ENCODE measurements at regions of chr19 and their contacts with region 1.

Region 1: DNA sequence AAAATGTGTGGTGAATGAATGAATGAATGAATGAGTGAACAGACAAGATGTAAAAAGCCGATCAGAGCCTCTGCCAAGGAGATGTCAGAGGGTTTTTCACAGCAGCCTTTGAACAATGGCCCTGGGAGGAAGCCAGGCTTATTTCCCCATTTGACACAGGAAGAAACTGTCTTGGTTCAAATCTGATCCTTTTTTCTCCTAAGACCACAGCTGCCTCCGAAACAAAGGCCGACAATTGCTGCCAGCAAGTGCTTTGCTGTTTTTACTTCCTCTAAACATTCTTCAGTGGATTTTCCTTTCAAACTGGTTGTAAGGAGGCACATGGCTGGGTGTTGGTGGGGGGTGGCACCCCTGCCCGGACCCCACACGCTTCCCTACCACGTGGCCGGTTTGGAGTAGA is 44.2 kb upstream of the HOMER3 start:
- DNase-seq: no peak
- H3K4me3 ChIP-seq: no peak overlapping the region
- CTCF ChIP-seq: no peak

Region 2: DNA sequence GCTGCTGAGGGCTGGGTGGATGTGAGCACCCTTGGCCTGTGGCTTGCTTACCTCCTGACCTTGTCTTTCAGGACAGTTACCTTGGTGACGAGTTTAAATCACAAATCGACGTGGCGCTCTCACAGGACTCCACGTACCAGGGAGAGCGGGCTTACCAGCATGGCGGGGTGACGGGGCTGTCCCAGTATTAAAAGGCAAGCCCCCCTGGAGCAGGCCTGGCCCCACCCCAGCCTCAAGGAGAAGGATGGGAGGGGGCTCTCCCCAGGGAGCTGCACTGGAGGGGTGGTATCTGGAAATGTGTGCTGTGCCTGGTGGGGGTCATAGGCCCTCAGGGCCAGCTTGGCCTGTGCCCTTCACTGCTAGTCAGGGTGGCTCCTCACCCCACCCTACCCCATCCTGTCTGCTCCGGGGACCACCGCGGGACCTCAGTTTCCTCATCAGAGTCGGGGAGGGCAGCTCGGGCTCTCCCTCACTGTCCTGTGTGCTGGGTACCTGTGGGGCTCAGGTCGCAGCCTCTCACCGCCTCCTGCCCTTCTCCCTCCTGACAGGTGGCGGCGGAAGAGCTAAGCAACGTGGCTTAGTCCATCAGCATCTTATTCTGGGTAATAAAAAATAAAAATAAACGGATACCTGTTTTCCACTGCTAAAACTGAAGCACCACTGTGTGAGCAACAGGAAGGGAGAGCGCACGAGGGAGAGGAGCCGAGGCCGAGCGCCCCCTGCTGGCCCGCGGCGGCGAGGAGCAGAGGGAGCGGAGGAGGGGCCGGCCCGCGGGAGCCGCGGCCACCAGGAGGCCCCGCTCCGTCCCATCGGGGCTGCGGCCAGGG is 119.1 kb before region 1 on chr19:
- CTCF ChIA-PET with region 1: interaction called, 17 read pairs
- POLR2A ChIA-PET with region 1: no interaction called
- DNase-seq: no peak
- H3K4me3 ChIP-seq: no peak overlapping the region
- CTCF ChIP-seq: peak; percentile 94

Region 3: GRCh38 chr19:18895038-18895823 is 90.0 kb before region 1 on chr19:
- CTCF ChIA-PET with region 1: interaction called, 16 read pairs
- POLR2A ChIA-PET with region 1: no interaction called
- DNase-seq: no peak
- H3K4me3 ChIP-seq: peak overlapping the region; percentile 49
- CTCF ChIP-seq: peak; percentile 29

Region 4: DNA sequence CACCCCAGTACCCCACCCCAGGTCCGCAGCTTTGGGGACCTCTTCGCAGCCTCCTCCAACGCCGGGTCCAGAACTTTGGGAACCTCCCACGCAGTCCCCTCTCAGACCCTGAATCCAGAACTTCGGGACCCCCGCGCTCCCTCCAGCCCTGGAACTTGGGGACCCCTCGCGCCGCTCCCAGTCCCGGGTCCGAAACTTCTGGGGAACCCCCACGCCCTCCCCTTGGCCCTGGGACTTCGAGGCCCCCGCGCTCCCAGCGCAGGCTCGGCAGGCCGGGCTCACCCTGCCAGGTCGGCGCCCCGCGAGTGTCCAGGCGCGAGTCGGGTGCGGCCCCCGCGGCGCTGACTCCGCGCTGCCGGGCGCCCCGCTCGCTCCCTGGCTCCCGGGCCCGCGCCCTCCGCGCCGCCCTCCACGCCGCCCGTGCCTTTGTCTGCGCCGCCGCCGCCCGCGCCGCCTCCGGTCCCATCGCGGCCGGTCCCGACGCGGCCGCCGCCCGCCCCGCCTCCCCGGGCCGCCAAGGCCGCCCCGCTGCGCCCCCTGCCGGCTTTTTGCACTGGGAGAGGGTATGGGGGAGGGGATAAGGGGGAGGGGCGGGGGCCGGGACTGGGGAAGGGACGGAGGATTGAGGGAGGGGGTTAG is 44.4 kb before region 1 on chr19 and contains the start of gene HOMER3:
- CTCF ChIA-PET with region 1: interaction called, 27 read pairs
- POLR2A ChIA-PET with region 1: no interaction called
- DNase-seq: no peak
- H3K4me3 ChIP-seq: peak within 1 kb of the TSS; percentile 83
- CTCF ChIP-seq: peak; percentile 60

Region 5: DNA sequence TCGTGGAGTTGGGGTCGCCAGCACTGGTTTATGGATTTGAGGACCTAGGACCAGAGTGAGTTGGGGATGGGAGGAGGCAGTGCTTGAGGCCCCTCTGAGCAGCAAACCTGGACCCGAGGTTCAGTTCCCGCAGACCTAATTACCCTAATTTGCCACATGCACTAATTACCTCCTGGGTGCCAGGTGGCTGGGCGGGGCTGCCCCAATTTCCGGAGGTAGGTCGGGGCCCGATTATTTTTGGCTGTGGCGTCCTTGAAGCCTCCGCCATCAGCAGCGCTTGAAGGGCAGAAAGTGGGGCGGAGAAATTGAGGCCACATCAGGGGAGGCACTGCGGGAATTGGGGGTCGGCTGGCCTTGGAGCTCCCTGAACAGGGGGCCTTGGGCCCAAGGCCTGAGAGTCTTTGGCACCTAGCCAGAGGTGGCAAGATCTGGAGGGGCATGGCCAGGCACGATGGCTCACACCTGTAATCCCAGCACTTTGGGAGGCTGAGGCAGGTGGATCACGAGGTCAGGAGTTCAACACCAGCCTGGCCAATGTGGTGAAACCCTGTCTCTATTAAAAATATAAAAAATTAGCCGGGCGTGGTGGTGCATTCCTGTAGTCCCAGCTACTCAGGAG is 38.2 kb before region 1 on chr19:
- CTCF ChIA-PET with region 1: interaction called, 15 read pairs
- POLR2A ChIA-PET with region 1: no interaction called
- DNase-seq: no peak
- H3K4me3 ChIP-seq: no peak overlapping the region
- CTCF ChIP-seq: no peak

Region 6: GRCh38 chr19:18972301-18972811 is 12.9 kb before region 1 on chr19:
- CTCF ChIA-PET with region 1: interaction called, 11 read pairs
- POLR2A ChIA-PET with region 1: interaction called, 6 read pairs
- DNase-seq: no peak
- H3K4me3 ChIP-seq: no peak overlapping the region
- CTCF ChIP-seq: no peak

Region 7: DNA sequence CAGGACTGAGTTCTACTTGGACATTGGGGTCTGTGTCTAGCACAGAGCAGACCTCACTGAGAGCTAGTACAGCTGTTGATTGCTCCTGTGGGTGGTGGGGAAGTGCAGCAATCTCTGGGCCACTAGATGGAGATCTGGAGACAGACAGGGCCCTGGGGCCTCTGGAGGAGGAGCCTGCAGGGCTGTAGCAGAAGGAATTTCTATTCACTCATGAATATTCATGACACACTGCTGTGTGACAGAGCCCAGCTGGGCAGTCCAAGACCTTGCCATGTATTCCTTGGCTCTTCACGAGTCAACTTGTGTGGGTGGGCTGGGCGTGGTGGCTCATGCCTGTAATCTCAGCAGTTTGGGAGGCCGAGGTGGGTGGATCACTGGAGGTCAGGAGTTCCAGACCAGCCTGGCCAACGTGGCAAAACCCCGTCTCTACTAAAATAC is 10.6 kb after region 1 on chr19:
- CTCF ChIA-PET with region 1: interaction called, 71 read pairs
- POLR2A ChIA-PET with region 1: no interaction called
- DNase-seq: peak; percentile 46
- H3K4me3 ChIP-seq: no peak overlapping the region
- CTCF ChIP-seq: peak; percentile 71

Region 8: DNA sequence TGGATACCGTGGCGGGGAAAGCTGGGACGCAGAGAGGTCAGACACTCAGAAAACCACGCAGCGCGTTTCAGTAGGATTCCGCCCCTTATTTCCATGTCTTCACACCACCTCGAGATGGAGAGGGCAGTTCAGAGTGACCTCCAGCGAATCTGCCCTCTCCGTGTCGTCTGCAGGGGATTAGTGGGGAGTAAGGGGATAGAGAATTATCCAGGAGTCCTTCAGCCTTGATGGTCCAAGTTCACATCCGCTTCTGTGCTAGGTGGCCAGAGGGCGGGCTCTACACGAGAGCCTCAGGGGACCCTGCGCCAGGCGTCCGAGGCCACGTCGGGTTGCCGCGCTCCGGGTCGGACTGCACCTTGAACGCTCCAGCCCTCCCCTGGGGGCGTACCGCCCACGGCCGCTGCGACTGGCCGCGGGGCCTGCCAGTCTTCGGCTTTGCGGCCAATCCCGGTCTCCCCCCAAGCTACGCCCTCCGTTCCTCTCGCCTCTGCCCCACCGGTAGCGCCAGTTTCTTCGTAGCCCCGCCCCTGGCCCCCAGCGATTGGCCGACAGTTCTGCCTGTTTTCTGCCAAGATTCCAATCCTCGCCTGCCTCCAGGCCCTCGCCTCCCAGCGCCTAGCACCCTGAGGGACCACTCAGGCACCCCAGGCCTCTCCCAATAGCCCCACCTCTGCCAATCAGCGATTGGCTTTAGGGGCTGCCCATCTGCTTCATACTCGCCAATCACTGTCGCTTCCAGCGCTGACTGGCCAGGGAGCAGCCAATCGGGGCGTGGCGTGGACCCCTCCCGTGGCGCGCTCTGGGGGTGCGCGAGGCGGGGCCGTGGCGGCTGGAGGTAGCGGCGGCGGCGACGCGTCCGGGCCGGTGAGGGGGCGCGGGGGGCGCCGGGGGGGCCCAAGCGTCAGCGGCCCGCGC is 78.2 kb after region 1 on chr19 and contains the start of gene SLC25A42:
- CTCF ChIA-PET with region 1: no interaction called
- POLR2A ChIA-PET with region 1: no interaction called
- DNase-seq: peak; percentile 98
- H3K4me3 ChIP-seq: peak within 1 kb of the TSS; percentile 74
- CTCF ChIP-seq: no peak